GM23248 (cell line): ENCODE measurements at regions of chr3 and their contacts with region 1.

Region 1: GRCh38 chr3:189276481-189277219 is 104.9 kb downstream of the TPRG1 start:
- DNase-seq: peak; percentile 84
- H3K4me3 ChIP-seq: peak overlapping the region; percentile 16; the same call in 1 of the 2 replicates
- H3K27ac ChIP-seq: peak overlapping the region; percentile 41
- H3K4me1 ChIP-seq: peaks cover 35% of the 10 kb centered on the region
- H3K27me3 ChIP-seq: no peaks in the 10 kb centered on the region

Region 2: DNA sequence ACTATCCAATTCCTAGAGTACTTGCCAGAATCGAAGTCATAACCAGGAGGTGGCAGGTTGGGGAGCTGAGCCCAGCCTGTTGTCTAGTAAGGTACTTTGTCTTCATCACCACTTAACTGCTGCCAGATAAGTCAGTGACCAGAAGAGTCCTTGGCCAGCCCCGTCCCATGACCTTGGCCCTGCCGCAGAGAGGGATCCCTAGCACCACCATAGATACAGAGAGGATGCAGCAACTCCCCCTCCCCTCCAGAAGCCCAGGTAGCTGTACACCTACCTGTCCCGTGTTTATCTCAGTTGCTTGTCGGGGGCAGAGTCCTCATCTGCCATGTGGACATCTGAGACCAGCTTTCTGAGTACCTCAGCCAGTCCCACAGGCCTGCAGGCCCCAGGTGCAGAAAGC is 201.0 kb after region 1 on chr3:
- in situ Hi-C with region 1: no loop called
- DNase-seq: no peak
- H3K4me3 ChIP-seq: no peak overlapping the region
- H3K27ac ChIP-seq: no peak overlapping the region
- H3K4me1 ChIP-seq: no peaks in the 10 kb centered on the region
- H3K27me3 ChIP-seq: no peaks in the 10 kb centered on the region

Region 3: DNA sequence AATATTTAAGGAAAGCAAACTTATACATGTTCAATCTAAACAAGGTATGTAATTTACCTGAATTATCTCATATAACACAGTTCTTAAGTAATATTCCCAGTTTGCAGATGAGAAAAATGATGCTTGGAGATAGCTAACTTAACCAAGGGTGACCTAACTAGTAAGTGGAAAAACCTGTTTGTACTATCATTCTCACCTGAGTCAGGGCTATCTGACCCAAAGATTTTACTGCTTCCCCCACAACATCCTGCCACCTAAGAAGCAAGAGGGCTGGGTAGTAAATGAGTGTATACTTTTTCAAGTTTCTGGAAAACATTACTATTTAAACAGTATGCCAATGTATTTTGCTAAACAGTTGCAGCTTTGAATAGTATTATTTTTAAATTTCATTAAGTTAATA is 365.1 kb after region 1 on chr3:
- in situ Hi-C with region 1: no loop called
- DNase-seq: no peak
- H3K4me3 ChIP-seq: no peak overlapping the region
- H3K27ac ChIP-seq: no peak overlapping the region
- H3K4me1 ChIP-seq: no peaks in the 10 kb centered on the region
- H3K27me3 ChIP-seq: no peaks in the 10 kb centered on the region

Region 4: DNA sequence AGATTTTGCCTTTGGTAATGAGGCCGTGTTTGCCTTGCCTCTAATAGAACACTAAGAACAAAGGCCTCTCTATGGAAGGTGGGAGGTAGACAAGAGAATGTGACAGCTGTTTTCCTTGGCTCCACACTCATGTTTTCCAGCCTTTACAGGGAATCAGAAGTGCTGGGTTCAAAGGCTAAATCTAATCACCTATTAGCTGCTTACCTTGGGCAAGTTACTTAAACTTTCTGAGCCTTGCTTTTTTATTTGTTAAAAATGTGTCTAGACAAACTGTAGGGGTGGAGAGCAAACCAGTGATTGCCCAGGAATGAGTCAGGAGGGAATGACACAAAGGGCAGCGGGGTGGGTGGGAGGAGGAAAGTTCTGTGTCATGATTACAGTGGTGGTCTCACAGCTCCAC is 665.0 kb after region 1 on chr3:
- in situ Hi-C with region 1: loop called (anchors 5 kb)
- DNase-seq: peak; percentile 75
- H3K4me3 ChIP-seq: no peak overlapping the region
- H3K27ac ChIP-seq: 0 out of 2 replicates have a peak overlapping the region, but pooled peaks have one; percentile 11
- H3K4me1 ChIP-seq: peaks cover 25% of the 10 kb centered on the region
- H3K27me3 ChIP-seq: no peaks in the 10 kb centered on the region

Region 5: DNA sequence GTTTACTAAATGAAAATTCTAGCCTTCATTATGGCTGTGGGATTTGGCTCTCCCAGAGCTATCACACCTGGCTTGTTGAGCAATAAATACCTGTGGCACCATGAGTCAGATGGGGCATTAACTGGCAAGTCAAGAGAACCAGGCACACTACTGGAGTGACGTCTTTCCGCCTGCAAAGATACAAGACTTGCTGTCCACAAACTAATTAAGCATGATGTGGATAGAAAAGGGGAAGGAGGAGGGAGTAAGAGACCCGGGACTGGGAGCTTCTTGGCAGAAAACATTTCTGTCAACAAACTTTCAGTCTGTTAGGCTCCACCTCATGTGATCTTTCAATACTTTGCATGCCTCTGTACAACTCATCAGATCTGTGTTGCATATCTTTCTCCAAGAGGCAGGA is 989.1 kb after region 1 on chr3:
- in situ Hi-C with region 1: no loop called
- DNase-seq: peak; percentile 31
- H3K4me3 ChIP-seq: no peak overlapping the region
- H3K27ac ChIP-seq: no peak overlapping the region
- H3K4me1 ChIP-seq: peaks cover 14% of the 10 kb centered on the region
- H3K27me3 ChIP-seq: no peaks in the 10 kb centered on the region